Gastrocnemius medialis (tissue), 4 donors: ENCODE measurements at regions of chr12 and their contacts with region 1.

Region 1: GRCh38 chr12:57005980-57006808 is at the start of gene ZBTB39:
- DNase-seq: peak in 1 of 2 donors; percentile 35
- ATAC-seq: peak; percentile 91 to 92
- H3K4me3 ChIP-seq: peak within 1 kb of the TSS; percentile 76 to 97 (median 93)
- H3K27ac ChIP-seq: peak within 1 kb of the TSS; percentile 76 to 81 (median 78)
- H3K4me1 ChIP-seq: peaks cover 14 to 15% of the 10 kb centered on the region in 2 donors
- H3K27me3 ChIP-seq: no peaks in the 10 kb centered on the region
- CTCF ChIP-seq: peak; percentile 21 to 68 (median 34)
- POLR2A ChIP-seq: peak in 1 of 2 donors; percentile 15
- total RNA-seq, gene ZBTB39: 2.2 to 3.8 (median 2.8) TPM

Region 2: GRCh38 chr12:56751712-56752598 is 254.2 kb before region 1 on chr12 and contains the start of gene PRIM1:
- in situ Hi-C with region 1: no loop called
- intact Hi-C with region 1: loop called (anchors 5 kb)
- DNase-seq: peak; percentile 56 to 72
- ATAC-seq: peak; percentile 88 to 92
- H3K4me3 ChIP-seq: peak within 1 kb of the TSS; percentile 66 to 86 (median 84)
- H3K27ac ChIP-seq: peak within 1 kb of the TSS; percentile 46 to 76 (median 72)
- H3K4me1 ChIP-seq: peaks cover 3 to 8% of the 10 kb centered on the region in 2 donors
- H3K27me3 ChIP-seq: no peaks in the 10 kb centered on the region
- CTCF ChIP-seq: peak in 3 of 5 experiments; percentile 27 to 50 (median 45)
- POLR2A ChIP-seq: peak; percentile 18
- total RNA-seq, gene PRIM1: 3.2 to 5.9 (median 3.7) TPM

Region 3: GRCh38 chr12:57111031-57111734 is 105.0 kb after region 1 on chr12 and contains the start of gene STAT6:
- in situ Hi-C with region 1: no loop called
- intact Hi-C with region 1: loop called (anchors 5 kb)
- DNase-seq: peak in 1 of 2 donors; percentile 73
- ATAC-seq: peak; percentile 55 to 60
- H3K4me3 ChIP-seq: peak within 1 kb of the TSS; percentile 58 to 68 (median 64)
- H3K27ac ChIP-seq: peak within 1 kb of the TSS; percentile 87 to 94 (median 93)
- H3K4me1 ChIP-seq: peaks cover 9 to 15% of the 10 kb centered on the region in 2 donors
- H3K27me3 ChIP-seq: no peaks in the 10 kb centered on the region
- CTCF ChIP-seq: no peak
- POLR2A ChIP-seq: peak; percentile 39 to 57
- total RNA-seq, gene STAT6: 12.5 to 17.4 (median 14.4) TPM